Activated CD4-positive, alpha-beta memory T cell treated with anti-CD3 and anti-CD28 coated beads for 36 hours (primary cell): ENCODE measurements at regions of chr20 and their contacts with region 1.

Region 1: DNA sequence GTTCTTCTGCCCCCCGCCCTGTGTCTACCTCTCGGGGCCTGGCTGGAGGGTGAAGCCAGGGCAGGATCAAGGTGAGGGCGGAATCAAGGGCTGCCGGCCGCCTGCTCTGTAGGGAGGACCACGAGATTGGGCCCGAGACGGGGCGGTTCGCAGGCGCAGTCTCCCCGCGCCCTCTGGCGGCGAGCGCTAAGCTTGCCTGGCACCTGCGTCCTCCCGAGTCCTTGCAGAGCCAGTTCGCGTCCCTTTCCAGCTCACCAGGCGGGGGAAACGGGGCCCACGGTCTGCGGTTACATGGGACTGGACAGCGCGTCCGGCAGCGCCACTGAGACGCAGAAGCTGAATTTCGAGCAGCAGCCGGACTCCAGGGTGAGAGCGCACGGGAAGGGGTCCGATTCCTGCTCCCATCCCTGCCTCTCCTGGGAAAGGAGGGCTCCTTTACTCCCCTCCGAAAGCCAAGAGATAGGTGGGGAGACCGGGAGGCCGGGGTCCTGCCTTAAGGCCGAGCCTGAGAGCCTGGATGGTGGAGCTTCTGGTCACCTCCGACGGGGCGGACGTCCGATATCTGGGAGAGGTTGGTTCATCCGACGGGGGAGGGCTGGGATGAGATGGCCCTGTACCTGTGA is 3.6 kb upstream of the MATN4 start:
- DNase-seq: peak; percentile 78
- H3K4me3 Mint-ChIP-seq: no peak overlapping the region
- H3K27ac Mint-ChIP-seq: no peak overlapping the region
- H3K4me1 Mint-ChIP-seq: peaks cover 8% of the 10 kb centered on the region
- H3K27me3 Mint-ChIP-seq: peaks cover 32% of the 10 kb centered on the region

Region 2: GRCh38 chr20:45218133-45218532 is 93.6 kb before region 1 on chr20:
- CTCF ChIA-PET with region 1: no interaction called
- POLR2A ChIA-PET with region 1: no interaction called
- intact Hi-C with region 1: no loop called
- DNase-seq: no peak
- H3K4me3 Mint-ChIP-seq: no peak overlapping the region
- H3K27ac Mint-ChIP-seq: no peak overlapping the region
- H3K4me1 Mint-ChIP-seq: no peaks in the 10 kb centered on the region
- H3K27me3 Mint-ChIP-seq: peaks cover 19% of the 10 kb centered on the region

Region 3: DNA sequence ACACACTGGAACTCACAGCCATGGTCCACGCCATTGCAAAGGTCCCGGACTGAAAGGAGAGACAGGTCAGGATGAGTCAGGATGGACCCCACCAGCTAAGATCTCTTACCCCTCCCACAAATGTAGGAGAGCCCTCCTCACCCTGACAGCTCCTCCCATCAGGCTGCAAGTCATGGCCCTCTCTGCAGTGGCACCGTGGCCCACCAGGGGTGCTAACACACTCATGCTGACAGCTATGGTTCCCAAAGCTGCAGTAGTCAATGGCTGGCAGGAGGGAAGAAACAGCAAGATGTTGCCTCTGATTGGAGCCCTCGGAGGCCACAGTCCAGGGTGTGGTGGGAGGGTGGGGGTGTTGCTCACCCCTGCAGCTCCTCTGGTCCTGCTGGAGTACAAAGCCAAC is 10.7 kb before region 1 on chr20:
- CTCF ChIA-PET with region 1: interaction called, 21 read pairs
- POLR2A ChIA-PET with region 1: no interaction called
- intact Hi-C with region 1: no loop called
- DNase-seq: peak; percentile 71
- H3K4me3 Mint-ChIP-seq: no peak overlapping the region
- H3K27ac Mint-ChIP-seq: no peak overlapping the region
- H3K4me1 Mint-ChIP-seq: peaks cover 32% of the 10 kb centered on the region
- H3K27me3 Mint-ChIP-seq: peaks cover 35% of the 10 kb centered on the region